ENCODE measurements at regions of chr13 and their contacts with region 1.

Region 1: GRCh38 chr13:99307648-99308339 is 595 bp upstream of the GPR183 start:
- DNase-seq: no peak
- ATAC-seq: no peak
- H3K4me3 ChIP-seq: no peak overlapping the region
- H3K27ac ChIP-seq: peak overlapping the region; percentile 40 to 63 (median 55)
- H3K4me1 ChIP-seq: peaks cover 6 to 11% of the 10 kb centered on the region in 2 donors
- H3K27me3 ChIP-seq: no peaks in the 10 kb centered on the region
- CTCF ChIP-seq: no peak
- POLR2A ChIP-seq: no peak

Region 2: DNA sequence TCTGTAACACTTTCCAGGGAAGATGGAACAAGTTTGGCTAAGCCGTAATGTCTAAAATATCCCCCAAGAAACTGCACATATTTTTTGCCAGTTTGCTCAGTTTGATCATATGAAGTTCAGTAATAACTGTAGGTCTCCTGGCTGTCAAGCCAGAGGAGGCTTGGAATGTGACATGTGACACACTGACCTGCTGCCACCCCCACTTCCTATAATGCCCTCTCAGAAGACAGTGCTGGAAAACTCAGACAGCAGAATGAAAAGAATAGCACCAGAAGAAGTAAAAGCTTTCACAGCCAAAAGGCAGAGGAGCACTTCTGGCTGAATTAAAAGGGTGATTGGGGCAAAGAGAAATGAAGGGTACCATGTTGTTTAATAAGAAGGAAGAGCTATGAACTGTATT is 174.6 kb before region 1 on chr13:
- in situ Hi-C with region 1: no loop called
- intact Hi-C with region 1: no loop called
- DNase-seq: no peak
- ATAC-seq: no peak
- H3K4me3 ChIP-seq: no peak overlapping the region
- H3K27ac ChIP-seq: no peak overlapping the region
- H3K4me1 ChIP-seq: no peaks in the 10 kb centered on the region
- H3K27me3 ChIP-seq: no peaks in the 10 kb centered on the region
- CTCF ChIP-seq: no peak
- POLR2A ChIP-seq: no peak

Region 3: GRCh38 chr13:99228737-99229691 is 78.8 kb before region 1 on chr13:
- in situ Hi-C with region 1: no loop called
- intact Hi-C with region 1: loop called (anchors 10 kb)
- DNase-seq: no peak
- ATAC-seq: peak in 1 of 2 donors; percentile 23
- H3K4me3 ChIP-seq: no peak overlapping the region
- H3K27ac ChIP-seq: peak overlapping the region; percentile 52 to 84 (median 72)
- H3K4me1 ChIP-seq: peaks cover 69 to 78% of the 10 kb centered on the region in 2 donors
- H3K27me3 ChIP-seq: no peaks in the 10 kb centered on the region
- CTCF ChIP-seq: no peak
- POLR2A ChIP-seq: no peak

Region 4: GRCh38 chr13:99281811-99282263 is 26.0 kb before region 1 on chr13:
- in situ Hi-C with region 1: no loop called
- intact Hi-C with region 1: loop called (anchors 1 kb)
- DNase-seq: peak; percentile 66 to 88
- ATAC-seq: peak; percentile 91 to 96
- H3K4me3 ChIP-seq: no peak overlapping the region
- H3K27ac ChIP-seq: peak overlapping the region; percentile 60 to 78 (median 75)
- H3K4me1 ChIP-seq: peaks cover 45 to 54% of the 10 kb centered on the region in 2 donors
- H3K27me3 ChIP-seq: no peaks in the 10 kb centered on the region
- CTCF ChIP-seq: no peak
- POLR2A ChIP-seq: peak; percentile 25 to 43

Region 5: GRCh38 chr13:99347911-99348451 is 40.2 kb after region 1 on chr13:
- in situ Hi-C with region 1: no loop called
- intact Hi-C with region 1: no loop called
- DNase-seq: peak; percentile 71 to 77
- ATAC-seq: peak; percentile 92 to 94
- H3K4me3 ChIP-seq: no peak overlapping the region
- H3K27ac ChIP-seq: peak overlapping the region; percentile 40 to 82 (median 75)
- H3K4me1 ChIP-seq: peaks cover 0 to 13% of the 10 kb centered on the region in 2 donors
- H3K27me3 ChIP-seq: no peaks in the 10 kb centered on the region
- CTCF ChIP-seq: no peak
- POLR2A ChIP-seq: no peak